Activated CD8-positive, alpha-beta T cell treated with anti-CD3 and anti-CD28 coated beads, Interleukin-2, amount 10 ng/mL, durations not matched to agents 7 days and 5 days (primary cell): ENCODE measurements at regions of chr1 and their contacts with region 1.

Region 1: DNA sequence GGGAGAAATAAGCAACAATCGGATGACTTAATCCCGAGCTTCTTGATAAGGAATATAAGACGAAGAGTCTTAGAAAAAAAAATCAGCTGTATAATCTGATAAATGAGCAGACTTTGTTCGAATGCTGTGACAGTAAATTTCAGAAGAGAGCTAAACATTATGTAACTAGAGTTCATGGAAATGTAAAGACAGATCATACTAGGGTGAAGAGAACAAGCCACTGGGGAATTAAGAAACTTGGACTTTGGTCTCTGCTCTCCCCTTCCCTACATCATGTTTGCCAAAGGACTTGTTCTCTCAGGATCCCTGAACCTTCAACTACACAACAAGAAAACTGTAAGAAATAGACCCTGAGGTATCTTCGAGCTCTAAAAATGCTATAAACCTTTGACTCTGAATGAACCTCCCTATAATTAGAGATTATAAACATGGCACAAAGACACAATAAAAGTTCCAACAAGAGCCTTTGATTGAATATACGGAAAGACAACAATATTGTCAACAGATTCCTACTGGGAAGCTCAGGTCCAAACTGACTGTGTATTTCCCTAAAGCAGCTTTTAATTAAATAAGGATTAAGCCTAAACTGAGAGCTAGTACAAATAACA is 27.5 kb downstream of the FRRS1 start:
- DNase-seq: no peak
- ATAC-seq: no peak
- H3K4me3 Mint-ChIP-seq: no peak overlapping the region
- H3K27ac Mint-ChIP-seq: no peak overlapping the region
- H3K4me1 Mint-ChIP-seq: no peaks in the 10 kb centered on the region
- H3K27me3 Mint-ChIP-seq: no peaks in the 10 kb centered on the region

Region 2: DNA sequence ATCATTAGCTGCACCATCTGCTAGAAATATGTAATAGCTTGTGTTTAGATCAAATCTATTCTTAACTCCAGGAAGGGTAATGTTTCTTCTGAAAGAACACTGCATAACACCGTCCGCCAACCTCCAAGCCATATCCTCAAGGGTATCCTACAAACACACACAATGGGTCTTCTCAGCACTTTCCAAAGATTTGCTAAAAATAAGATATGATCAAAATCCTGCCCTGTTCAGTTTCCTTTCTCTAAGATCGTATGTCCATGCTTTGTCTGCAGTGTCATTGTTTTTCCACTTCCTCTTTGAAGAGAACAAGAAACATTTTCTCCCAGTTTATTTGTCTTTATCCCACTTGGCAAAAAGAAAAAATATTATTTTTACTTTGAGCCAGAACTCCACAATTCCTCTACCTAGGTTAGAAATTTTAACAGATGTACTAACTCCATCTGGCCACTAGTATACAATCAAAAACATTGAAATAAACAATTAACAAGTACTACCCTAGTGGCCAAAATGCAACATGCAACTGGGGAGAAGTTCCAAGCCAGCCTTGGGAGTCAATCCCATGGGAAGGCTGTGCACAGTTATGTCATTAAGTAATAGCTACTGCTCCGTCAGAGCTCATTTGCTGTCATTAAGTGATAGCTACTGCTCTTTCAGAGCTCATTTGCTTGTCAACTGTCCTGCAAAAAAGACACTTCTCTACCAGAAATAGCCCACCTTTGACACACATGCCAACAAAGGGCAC is 10.3 kb before region 1 on chr1:
- CTCF ChIA-PET with region 1: interaction called, 12 read pairs
- POLR2A ChIA-PET with region 1: interaction called, 5 read pairs
- DNase-seq: no peak
- ATAC-seq: no peak
- H3K4me3 Mint-ChIP-seq: no peak overlapping the region
- H3K27ac Mint-ChIP-seq: no peak overlapping the region
- H3K4me1 Mint-ChIP-seq: no peaks in the 10 kb centered on the region
- H3K27me3 Mint-ChIP-seq: no peaks in the 10 kb centered on the region

Region 3: DNA sequence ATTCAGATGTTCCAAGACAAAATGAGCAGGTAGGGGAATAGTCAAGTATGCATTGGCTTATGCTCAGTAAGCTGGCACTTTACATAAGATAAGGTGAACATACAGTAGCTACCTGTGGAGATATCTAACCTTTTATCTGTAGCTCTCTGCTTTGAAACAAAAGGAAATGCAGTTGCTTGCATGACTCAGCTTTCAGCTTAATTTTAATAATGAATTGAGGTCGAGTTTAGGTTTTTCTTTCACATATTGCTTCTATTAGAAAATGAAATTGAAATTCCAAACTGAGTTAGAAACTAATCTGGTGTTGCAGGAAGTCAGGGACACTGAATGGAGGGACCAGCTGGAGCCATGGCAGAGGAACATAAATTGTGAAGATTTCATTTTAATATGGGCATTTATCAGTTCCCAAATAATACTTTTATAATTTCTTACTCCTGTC is 19.1 kb after region 1 on chr1:
- CTCF ChIA-PET with region 1: no interaction called
- POLR2A ChIA-PET with region 1: no interaction called
- DNase-seq: no peak
- ATAC-seq: no peak
- H3K4me3 Mint-ChIP-seq: peak overlapping the region; percentile 19
- H3K27ac Mint-ChIP-seq: peak overlapping the region; percentile 60
- H3K4me1 Mint-ChIP-seq: peaks cover 16% of the 10 kb centered on the region
- H3K27me3 Mint-ChIP-seq: peaks cover 2% of the 10 kb centered on the region

Region 4: GRCh38 chr1:99956755-99957154 is 217.8 kb after region 1 on chr1:
- CTCF ChIA-PET with region 1: no interaction called
- POLR2A ChIA-PET with region 1: no interaction called
- DNase-seq: no peak
- ATAC-seq: no peak
- H3K4me3 Mint-ChIP-seq: no peak overlapping the region
- H3K27ac Mint-ChIP-seq: no peak overlapping the region
- H3K4me1 Mint-ChIP-seq: no peaks in the 10 kb centered on the region
- H3K27me3 Mint-ChIP-seq: no peaks in the 10 kb centered on the region